ENCODE measurements at regions of chr2 and their contacts with region 1.

Region 1: DNA sequence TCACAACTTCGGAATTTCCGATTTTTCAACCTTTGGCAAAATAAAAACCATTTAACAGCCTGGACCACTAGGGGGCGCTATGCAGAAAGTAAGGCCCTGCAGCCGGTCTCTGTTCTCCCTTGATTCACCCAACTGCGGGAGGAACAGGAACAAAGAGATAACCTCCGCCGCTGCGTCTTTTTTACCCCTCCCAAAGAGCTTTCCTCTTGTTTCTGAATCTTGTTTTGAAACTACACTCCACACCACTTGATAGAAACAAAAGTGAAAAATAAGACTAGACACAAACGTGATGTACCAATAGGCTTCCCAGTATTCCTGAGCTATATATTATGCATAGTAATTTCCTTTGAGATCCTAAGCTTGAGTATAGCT is 231.2 kb downstream of the MYO3B start:
- DNase-seq: peak; percentile 80
- ATAC-seq: peak; percentile 73
- H3K4me3 Mint-ChIP-seq: peak overlapping the region; percentile 40; the same call in 1 of the 2 replicates
- H3K27ac Mint-ChIP-seq: no peak overlapping the region
- H3K4me1 Mint-ChIP-seq: peaks cover 18% of the 10 kb centered on the region
- H3K27me3 Mint-ChIP-seq: no peaks in the 10 kb centered on the region; the same call in 1 of the 2 replicates
- CTCF ChIP-seq: peak; percentile 95

Region 2: GRCh38 chr2:170204298-170204951 is 204.7 kb before region 1 on chr2:
- CTCF ChIA-PET with region 1: no interaction called
- POLR2A ChIA-PET with region 1: no interaction called
- DNase-seq: no peak
- ATAC-seq: no peak
- H3K4me3 Mint-ChIP-seq: no peak overlapping the region
- H3K27ac Mint-ChIP-seq: no peak overlapping the region
- H3K4me1 Mint-ChIP-seq: peaks cover 4% of the 10 kb centered on the region; the same call in 1 of the 2 replicates
- H3K27me3 Mint-ChIP-seq: no peaks in the 10 kb centered on the region
- CTCF ChIP-seq: no peak

Region 3: GRCh38 chr2:170235860-170236679 is 173.1 kb before region 1 on chr2:
- CTCF ChIA-PET with region 1: interaction called, 11 read pairs
- POLR2A ChIA-PET with region 1: no interaction called
- DNase-seq: peak; percentile 36
- ATAC-seq: peak; percentile 85
- H3K4me3 Mint-ChIP-seq: no peak overlapping the region
- H3K27ac Mint-ChIP-seq: no peak overlapping the region
- H3K4me1 Mint-ChIP-seq: peaks cover 27% of the 10 kb centered on the region
- H3K27me3 Mint-ChIP-seq: peaks cover 7% of the 10 kb centered on the region
- CTCF ChIP-seq: peak; percentile 43

Region 4: GRCh38 chr2:170282851-170283250 is 126.3 kb before region 1 on chr2:
- CTCF ChIA-PET with region 1: no interaction called
- POLR2A ChIA-PET with region 1: no interaction called
- DNase-seq: peak; percentile 21
- ATAC-seq: peak; percentile 96
- H3K4me3 Mint-ChIP-seq: no peak overlapping the region
- H3K27ac Mint-ChIP-seq: no peak overlapping the region
- H3K4me1 Mint-ChIP-seq: no peaks in the 10 kb centered on the region
- H3K27me3 Mint-ChIP-seq: no peaks in the 10 kb centered on the region
- CTCF ChIP-seq: no peak

Region 5: DNA sequence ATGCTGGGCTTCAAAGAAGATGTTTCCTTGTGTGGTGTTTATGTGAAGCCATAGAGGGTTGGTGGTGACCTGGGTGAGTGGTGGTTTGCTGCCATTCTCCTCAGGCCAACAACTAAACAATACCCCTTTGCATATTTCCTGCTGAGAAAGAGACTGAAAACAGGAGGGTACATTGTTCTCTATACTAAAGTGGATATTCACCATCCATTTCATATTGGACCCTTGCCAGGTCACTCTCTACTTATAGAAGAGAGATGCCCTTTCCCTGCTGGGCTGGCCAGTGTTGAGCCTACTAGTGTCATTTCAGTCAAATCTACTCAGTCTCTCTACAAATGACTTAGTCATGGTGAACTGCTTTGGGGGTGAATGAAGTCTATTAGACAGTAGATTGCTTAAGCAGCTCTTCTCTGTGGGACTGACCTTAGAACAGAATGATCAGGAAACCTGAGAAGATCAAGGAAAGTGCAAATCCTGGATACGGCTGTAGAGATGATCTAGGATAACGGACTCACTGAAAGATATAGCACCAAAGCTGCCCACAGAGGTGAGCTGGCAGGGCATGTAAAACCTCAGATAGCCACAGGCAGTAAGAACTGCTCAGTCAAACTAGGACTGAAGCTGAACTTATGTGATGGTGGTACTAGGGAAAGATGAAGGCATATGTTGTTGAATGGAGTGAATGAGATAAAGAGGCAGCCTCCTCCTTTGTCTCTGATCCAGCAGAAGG is 76.3 kb before region 1 on chr2:
- CTCF ChIA-PET with region 1: no interaction called
- POLR2A ChIA-PET with region 1: no interaction called
- DNase-seq: no peak
- ATAC-seq: no peak
- H3K4me3 Mint-ChIP-seq: no peak overlapping the region
- H3K27ac Mint-ChIP-seq: no peak overlapping the region
- H3K4me1 Mint-ChIP-seq: peaks cover 2% of the 10 kb centered on the region
- H3K27me3 Mint-ChIP-seq: peaks cover 5% of the 10 kb centered on the region; the same call in 1 of the 2 replicates
- CTCF ChIP-seq: no peak

Region 6: DNA sequence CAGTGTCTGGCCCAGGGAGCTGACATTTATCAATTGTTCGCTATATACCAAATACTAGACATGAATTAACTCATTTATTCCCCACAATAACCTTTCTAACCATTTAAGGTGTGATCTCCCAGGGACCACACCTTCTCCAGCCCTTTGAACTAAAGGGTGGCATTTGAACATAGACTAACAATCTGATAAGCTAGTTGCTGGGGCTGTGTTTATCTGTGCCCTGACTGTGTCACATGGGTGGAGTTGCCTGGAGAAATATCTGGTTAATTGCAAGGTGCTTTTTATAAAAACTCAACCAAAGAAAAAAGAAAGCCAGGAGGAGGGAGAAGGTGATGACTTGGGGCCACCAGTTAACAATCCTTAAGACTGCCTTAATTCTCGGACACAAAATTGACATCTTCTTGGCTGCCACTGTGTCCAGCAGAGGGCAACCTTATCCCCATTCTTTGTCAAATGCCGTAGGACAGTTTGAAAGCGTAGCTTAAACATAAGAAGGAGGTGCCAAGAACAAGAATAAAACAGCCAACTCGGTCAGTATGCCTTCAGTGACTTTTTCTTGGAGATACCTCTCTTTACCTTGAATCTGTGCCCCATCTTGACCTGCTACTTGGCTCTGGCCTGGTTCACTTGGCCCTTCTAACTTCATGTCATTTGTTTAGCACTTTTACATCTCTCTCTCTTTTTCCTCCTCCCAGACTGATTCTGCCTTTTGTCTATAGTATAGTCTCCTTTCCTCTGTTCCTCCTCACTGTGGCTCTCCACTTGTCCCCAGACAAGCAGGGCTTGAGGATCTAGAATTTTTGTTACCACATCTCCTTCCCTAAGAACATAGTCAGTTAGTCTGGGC is 47.8 kb before region 1 on chr2:
- CTCF ChIA-PET with region 1: interaction called, 13 read pairs
- POLR2A ChIA-PET with region 1: no interaction called
- DNase-seq: peak; percentile 66
- ATAC-seq: peak; percentile 84
- H3K4me3 Mint-ChIP-seq: no peak overlapping the region
- H3K27ac Mint-ChIP-seq: no peak overlapping the region
- H3K4me1 Mint-ChIP-seq: peaks cover 41% of the 10 kb centered on the region
- H3K27me3 Mint-ChIP-seq: peaks cover 5% of the 10 kb centered on the region; the same call in 1 of the 2 replicates
- CTCF ChIP-seq: peak; percentile 36

Region 7: GRCh38 chr2:170420961-170421687 is 12.0 kb after region 1 on chr2:
- CTCF ChIA-PET with region 1: interaction called, 27 read pairs
- POLR2A ChIA-PET with region 1: no interaction called
- DNase-seq: no peak
- ATAC-seq: no peak
- H3K4me3 Mint-ChIP-seq: no peak overlapping the region
- H3K27ac Mint-ChIP-seq: no peak overlapping the region
- H3K4me1 Mint-ChIP-seq: no peaks in the 10 kb centered on the region
- H3K27me3 Mint-ChIP-seq: peaks cover 8% of the 10 kb centered on the region
- CTCF ChIP-seq: no peak

Region 8: DNA sequence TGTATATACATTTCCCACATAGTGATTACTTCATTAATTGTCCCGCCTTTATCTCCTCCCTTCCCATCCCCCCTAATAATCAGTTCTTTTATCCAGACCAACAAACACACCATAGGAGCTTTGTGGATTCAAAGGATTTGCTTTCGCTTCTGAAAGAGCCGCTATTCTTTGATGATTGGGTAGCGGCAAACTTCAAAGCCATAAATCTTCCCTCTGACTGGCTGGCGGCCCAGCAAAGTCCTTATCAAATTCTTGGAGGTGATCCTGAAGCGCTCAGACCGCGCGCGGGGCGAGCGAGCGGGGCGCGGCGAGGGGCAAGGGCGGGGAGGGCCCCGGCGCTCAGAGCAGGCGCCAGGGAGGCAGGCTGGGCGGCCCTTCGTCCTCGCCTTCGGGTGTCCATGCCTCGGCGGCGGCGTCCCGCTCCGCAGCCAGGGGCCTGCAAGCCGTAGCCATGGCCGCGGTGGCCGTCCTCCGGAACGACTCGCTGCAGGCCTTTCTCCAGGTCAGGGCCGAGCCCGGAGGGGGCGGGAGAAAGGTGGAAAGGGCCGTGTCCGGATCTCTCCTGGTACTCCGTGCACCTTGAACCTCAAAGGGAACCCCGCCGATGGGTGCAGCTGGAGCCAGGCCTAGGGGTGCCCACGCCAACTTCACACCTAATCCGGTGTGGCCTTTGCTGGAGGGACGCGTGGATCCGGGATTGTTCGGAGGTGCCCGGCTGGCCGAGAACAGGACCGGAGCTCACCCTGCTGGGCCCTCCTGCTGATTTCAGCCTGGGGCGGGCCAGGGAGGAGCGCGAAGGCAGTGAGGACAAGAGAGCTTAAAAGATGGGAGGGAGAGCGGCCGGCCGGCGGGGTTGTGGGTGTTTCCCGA is 306.1 kb after region 1 on chr2 and contains the start of gene SP5:
- CTCF ChIA-PET with region 1: interaction called, 22 read pairs
- POLR2A ChIA-PET with region 1: interaction called, 3 read pairs
- DNase-seq: peak; percentile 66
- ATAC-seq: peak; percentile 17
- H3K4me3 Mint-ChIP-seq: peak within 1 kb of the TSS; percentile 75
- H3K27ac Mint-ChIP-seq: no peak within 1 kb of the TSS
- H3K4me1 Mint-ChIP-seq: peaks cover 52% of the 10 kb centered on the region
- H3K27me3 Mint-ChIP-seq: peaks cover 100% of the 10 kb centered on the region
- CTCF ChIP-seq: no peak
- total RNA-seq, gene SP5: 1.7 to 9.7 TPM (median 7.0 TPM) in 3 replicates

Measured in WTC11 (cell line).